ENCODE measurements at regions of chr10 and their contacts with region 1.

Region 1: GRCh38 chr10:110225756-110226542 is 18.5 kb downstream of the MXI1 start:
- DNase-seq: peak; percentile 91 to 95
- ATAC-seq: peak; percentile 73 to 78 (median 77)
- H3K4me3 ChIP-seq: peak overlapping the region; percentile 96
- H3K27ac ChIP-seq: peak overlapping the region; percentile 99
- H3K4me1 ChIP-seq: peaks cover 23% of the 10 kb centered on the region
- H3K27me3 ChIP-seq: no peaks in the 10 kb centered on the region
- CTCF ChIP-seq: peak; percentile 77

Region 2: DNA sequence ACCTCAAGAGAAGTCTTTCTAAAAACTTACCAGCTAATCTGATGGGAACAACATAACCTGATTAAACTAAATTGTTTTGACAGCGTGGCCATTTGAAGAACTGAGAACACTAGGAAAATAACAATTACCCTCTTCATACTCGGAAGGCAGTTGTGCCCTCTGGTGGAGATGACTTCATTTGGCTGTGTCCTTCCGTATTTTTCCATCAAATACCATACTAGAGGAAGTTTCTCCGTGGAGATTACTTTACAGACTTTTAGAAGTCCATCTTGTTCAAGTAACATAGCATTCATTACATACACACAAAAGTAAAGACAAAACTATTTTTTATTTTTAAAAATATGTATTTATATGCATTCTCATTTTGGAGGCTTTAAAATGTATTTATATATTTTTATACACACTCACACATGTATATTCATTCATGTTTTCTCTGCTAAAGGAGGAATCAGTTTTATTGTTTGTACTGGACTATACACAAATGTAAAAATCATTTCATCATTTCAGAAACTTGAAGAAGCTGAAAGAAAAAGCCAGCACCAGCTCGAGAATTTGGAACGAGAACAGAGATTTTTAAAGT is 53.5 kb after region 1 on chr10:
- intact Hi-C with region 1: loop called in 1 of 2 experiments (anchors 5 kb)
- DNase-seq: peak in 1 of 2 donors; percentile 30
- ATAC-seq: peak in 3 of 4 donors; percentile 71 to 87 (median 79)
- H3K4me3 ChIP-seq: no peak overlapping the region
- H3K27ac ChIP-seq: no peak overlapping the region
- H3K4me1 ChIP-seq: peaks cover 39% of the 10 kb centered on the region
- H3K27me3 ChIP-seq: no peaks in the 10 kb centered on the region
- CTCF ChIP-seq: peak; percentile 77

Region 3: DNA sequence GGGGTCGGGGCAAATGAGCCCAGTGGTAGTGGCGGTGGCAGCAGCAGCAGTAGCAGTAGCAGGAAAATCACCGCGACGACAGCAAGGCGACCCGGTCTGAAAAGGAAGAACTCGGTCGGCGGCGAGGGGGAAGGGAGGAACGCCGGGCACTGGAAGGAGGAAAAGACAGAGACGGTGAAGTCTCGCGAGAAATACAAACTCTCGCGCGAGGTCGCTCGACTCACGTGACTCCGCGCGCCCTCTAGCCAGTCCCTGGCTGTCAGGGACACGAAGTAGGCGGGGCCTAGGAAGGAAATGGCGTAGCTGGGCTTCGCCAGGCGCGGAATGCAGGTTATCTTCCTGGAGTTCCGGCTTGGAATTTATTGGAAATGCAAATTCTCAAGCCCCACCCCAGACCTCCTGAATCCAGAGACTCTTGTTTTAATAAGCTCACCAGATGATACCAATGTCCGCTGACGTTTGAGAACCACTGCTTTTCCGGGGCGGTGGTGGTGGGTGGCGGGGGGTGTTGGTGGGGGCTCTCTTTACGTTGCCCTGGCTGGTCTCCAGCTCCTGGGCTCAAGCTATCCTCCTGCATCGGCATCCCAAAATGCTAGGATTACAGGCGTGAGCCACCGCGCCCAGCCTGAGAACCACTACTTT is 79.0 kb after region 1 on chr10 and contains the start of gene SMNDC1:
- intact Hi-C with region 1: loop called in 1 of 2 experiments (anchors 2 kb)
- DNase-seq: peak; percentile 97 to 98
- ATAC-seq: peak; percentile 94 to 98 (median 95)
- H3K4me3 ChIP-seq: peak within 1 kb of the TSS; percentile 74
- H3K27ac ChIP-seq: peak within 1 kb of the TSS; percentile 88
- H3K4me1 ChIP-seq: peaks cover 51% of the 10 kb centered on the region
- H3K27me3 ChIP-seq: no peaks in the 10 kb centered on the region
- CTCF ChIP-seq: no peak
- total RNA-seq, gene SMNDC1: 24.4 to 38.0 (median 29.2) TPM

Region 4: GRCh38 chr10:110746254-110746826 is 520.4 kb after region 1 on chr10:
- intact Hi-C with region 1: no loop called
- DNase-seq: peak; percentile 43 to 57
- ATAC-seq: peak; percentile 74 to 85 (median 79)
- H3K4me3 ChIP-seq: no peak overlapping the region
- H3K27ac ChIP-seq: no peak overlapping the region
- H3K4me1 ChIP-seq: peaks cover 15% of the 10 kb centered on the region
- H3K27me3 ChIP-seq: no peaks in the 10 kb centered on the region
- CTCF ChIP-seq: peak; percentile 82

Measured in psoas muscle (tissue), 8 donors.